ENCODE measurements at regions of chr13 and their contacts with region 1.

Region 1: DNA sequence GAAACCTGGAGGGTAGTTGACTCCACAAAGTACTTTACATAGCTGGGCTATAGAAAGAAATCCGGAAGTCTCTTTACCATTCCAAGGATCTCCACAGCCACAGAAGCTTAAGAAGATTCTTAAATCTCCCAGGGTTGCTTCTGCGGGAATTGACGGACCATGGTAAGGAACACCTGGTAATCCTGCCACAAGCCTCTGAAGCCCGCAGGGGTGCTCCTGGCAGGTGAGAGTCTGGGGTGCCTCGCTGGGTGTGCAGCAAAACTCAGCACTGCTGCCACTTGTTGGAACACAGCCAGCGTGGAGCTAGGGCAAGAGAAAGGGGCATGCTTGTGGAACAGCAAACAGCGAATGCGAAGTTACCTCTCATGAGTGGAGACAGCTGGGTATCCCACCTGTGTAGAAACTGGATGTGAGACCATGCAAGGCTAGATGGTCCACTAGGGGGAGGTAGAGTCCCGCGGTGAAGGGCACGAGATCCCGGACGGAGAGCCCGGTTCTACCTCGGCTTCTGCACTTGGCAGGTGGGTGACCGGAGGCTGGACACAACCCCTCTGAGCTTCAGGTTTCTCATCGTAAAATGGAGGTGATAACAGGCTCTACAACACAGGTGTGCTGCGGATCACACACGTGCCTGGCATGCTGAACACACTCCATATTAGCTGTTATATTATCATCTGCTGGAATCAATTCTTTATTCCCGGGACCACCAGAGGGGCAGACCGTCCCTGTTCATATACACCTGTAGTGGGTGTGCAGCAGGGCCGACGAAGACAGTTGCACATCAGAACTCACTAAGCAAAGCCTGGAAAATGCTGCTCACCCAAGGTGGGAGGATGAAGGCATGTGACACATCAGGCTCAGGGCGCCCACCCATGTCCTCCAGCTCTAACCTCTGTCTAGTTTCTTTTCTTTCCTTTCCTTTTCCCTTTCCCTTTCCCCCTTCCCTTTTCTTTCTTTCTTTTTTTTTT is 24.1 kb upstream of the UBAC2 start:
- DNase-seq: peak; percentile 72
- ATAC-seq: peak; percentile 94

Region 2: DNA sequence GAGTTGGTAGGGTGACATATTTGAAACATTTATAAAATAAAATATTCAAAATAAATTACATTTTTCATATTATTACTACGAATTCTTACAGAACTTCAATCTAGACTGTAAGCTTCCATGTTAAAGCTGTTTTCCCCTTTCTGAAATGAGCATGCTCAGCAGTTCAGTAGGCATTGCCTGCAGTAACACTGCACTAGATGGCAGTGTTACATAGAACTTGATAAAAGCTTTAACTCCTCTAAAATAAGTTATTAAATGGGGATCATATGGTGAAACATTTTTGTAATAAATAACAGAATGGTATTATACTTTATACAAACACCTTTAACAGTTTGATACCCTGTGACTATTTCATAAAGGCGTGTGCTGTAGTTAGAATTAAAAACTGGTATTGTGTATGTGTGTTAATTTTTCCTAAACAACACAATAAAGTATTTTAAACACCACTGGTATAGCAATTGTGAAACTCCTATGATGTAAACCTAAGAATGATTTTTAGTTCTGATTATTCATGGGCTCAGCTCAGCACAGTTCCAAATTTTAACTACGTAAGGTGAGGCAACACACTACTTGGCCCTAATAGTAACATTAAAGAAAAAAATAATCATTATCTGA is 93.1 kb after region 1 on chr13:
- intact Hi-C with region 1: loop called (anchors 5 kb)
- DNase-seq: no peak
- ATAC-seq: peak; percentile 73

Region 3: GRCh38 chr13:99331881-99332293 is 155.3 kb after region 1 on chr13:
- intact Hi-C with region 1: no loop called
- DNase-seq: no peak
- ATAC-seq: no peak

Region 4: DNA sequence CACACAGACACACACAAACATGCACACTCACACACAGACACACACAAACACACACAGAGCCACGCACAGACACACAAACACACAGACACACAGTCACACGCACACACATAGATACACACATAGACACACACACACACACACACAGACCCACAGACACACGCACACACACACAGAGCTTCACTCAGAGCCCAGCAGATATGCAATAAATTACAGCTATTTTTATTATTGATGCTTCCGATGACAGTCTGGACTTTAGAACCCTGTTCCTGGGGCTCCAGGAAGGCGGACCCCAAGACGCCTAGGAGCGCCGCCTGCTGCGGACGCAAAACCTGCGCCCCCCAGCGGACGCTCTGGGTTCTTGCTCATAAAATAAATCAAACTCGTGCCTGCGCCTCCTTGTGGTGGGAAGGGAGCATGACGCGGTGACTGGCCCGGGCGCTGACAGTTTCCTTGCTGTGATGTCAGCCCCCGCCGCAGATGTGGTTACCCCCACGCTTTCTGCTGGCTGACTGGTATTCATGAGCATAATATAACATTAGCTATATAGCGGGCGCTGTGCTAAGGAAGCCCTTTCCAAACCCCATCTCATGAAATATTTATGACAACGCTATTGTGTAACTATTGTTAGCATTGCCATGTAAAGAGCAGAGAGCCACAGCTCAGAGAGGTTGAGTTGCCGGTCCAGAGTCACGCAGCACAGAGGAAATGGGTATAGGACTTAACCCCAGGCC is 260.3 kb after region 1 on chr13:
- intact Hi-C with region 1: loop called (anchors 2 kb)
- DNase-seq: peak; percentile 91
- ATAC-seq: peak; percentile 72